Heart right ventricle (tissue), 16 donors: ENCODE measurements at regions of chr12 and their contacts with region 1.

Region 1: GRCh38 chr12:85834378-85834777 is 1.8 kb downstream of the RASSF9 start:
- DNase-seq: no peak
- ATAC-seq: no peak
- H3K4me3 ChIP-seq: peak overlapping the region in 9 of 10 donors; percentile 36 to 71 (median 61)
- H3K27ac ChIP-seq: peak overlapping the region in 8 of 10 donors; percentile 28 to 93 (median 86)
- H3K4me1 ChIP-seq: peaks cover 0 to 57% (median 26%) of the 10 kb centered on the region in 9 donors
- H3K27me3 ChIP-seq: no peaks in the 10 kb centered on the region
- CTCF ChIP-seq: no peak

Region 2: DNA sequence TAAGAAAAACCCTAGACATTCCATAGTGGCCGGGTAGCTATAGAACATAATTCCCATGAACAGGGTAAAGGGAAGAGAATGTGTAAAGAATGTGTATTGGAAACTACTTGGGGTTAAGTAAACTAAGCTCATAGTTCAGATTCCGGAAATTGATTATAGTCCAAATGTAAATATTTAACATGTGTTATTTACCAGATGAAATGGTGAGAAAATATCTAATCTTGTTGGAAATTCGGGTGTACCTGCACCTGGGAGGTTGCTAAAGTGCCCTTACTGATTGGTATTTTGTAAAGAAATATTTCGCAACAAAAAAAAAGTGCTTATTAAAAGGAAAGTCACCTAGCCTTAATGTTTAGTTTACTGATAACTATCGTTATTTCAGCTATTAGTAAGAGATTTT is 12.6 kb before region 1 on chr12:
- intact Hi-C with region 1: loop called in 1 of 10 experiments (anchors 2 kb)
- DNase-seq: no peak
- ATAC-seq: no peak
- H3K4me3 ChIP-seq: no peak overlapping the region
- H3K27ac ChIP-seq: no peak overlapping the region
- H3K4me1 ChIP-seq: no peaks in the 10 kb centered on the region
- H3K27me3 ChIP-seq: no peaks in the 10 kb centered on the region
- CTCF ChIP-seq: no peak